ENCODE measurements at regions of chr17 and their contacts with region 1.

Region 1: GRCh38 chr17:77404812-77405581 is 264.2 kb downstream of the SEC14L1 start:
- DNase-seq: peak; percentile 96
- ATAC-seq: peak; percentile 84
- H3K4me3 Mint-ChIP-seq: peak overlapping the region; percentile 84
- H3K27ac Mint-ChIP-seq: peak overlapping the region; percentile 91
- H3K4me1 Mint-ChIP-seq: peaks cover 90% of the 10 kb centered on the region
- H3K27me3 Mint-ChIP-seq: no peaks in the 10 kb centered on the region

Region 2: DNA sequence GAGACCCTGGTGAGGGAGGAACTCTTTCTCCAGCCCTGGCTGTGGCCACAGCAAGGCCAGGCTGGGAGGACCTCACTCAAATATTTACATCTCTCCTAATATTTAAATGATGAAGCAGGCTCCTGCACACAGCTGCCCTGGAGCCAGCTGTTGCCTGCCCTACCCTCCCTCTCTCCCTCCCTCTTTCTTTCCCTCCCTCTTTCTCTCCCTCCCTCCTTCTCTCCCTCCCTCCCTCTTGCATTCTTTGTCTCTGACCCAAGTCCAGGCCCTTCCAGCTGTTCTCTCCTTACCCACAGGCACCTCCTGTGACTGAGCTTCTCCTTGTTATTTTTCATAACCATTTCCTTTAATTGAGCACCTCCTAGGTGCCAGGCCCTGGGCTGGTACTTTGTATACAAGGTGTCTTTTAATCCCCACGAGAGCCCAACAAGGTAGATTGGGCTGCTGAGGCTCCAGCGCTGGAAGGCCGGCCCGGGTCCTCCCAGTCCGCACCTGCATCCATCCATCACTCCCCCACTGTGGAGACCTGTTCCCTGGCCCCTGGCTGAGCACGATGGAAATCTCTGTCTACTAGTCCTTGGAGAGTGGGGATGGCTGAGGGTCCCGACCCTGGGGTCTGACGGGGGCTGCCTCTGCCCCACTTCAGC is 21.9 kb before region 1 on chr17:
- CTCF ChIA-PET with region 1: interaction called, 53 read pairs
- DNase-seq: no peak
- ATAC-seq: no peak
- H3K4me3 Mint-ChIP-seq: no peak overlapping the region
- H3K27ac Mint-ChIP-seq: peak overlapping the region; percentile 72
- H3K4me1 Mint-ChIP-seq: peaks cover 80% of the 10 kb centered on the region
- H3K27me3 Mint-ChIP-seq: no peaks in the 10 kb centered on the region

Region 3: GRCh38 chr17:77420804-77421629 is 16.0 kb after region 1 on chr17:
- CTCF ChIA-PET with region 1: interaction called, 33 read pairs
- DNase-seq: no peak
- ATAC-seq: peak; percentile 43
- H3K4me3 Mint-ChIP-seq: peak overlapping the region; percentile 42
- H3K27ac Mint-ChIP-seq: peak overlapping the region; percentile 68
- H3K4me1 Mint-ChIP-seq: peaks cover 47% of the 10 kb centered on the region
- H3K27me3 Mint-ChIP-seq: no peaks in the 10 kb centered on the region

Region 4: DNA sequence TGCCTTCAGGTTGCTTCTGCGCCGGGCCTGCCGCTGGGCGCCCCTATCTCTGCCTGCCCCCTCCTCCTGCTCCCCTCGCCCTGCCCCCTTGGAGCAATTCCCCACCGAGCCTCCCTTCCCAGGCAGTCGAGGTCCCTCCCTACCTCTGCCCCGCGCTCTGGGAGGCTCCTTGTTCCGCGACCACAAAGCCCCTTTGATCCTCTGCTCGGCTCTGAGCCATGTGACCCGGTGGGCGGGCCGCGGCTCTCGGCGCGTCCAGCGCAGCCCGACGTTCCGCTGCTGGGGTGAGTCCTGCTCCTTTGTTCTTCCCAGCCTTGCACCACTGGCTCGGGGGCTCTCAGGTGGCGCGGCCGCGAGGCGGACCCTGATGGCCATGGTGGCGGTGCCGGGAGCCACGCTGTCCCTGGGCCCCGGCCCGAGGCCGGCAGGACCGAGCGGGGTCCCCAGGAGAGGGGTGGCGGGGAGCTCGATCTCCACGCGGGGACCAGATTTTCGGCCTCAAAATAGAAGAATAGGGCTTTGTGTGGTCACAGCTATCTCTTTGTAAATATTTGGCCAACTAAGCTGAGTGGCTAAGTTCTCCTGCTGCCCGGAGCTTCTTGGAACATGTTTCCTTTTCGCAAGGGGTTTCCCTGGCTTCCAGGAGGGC is 46.4 kb after region 1 on chr17:
- CTCF ChIA-PET with region 1: interaction called, 27 read pairs
- DNase-seq: peak; percentile 76
- ATAC-seq: peak; percentile 54
- H3K4me3 Mint-ChIP-seq: peak overlapping the region; percentile 86
- H3K27ac Mint-ChIP-seq: peak overlapping the region; percentile 99
- H3K4me1 Mint-ChIP-seq: peaks cover 64% of the 10 kb centered on the region
- H3K27me3 Mint-ChIP-seq: no peaks in the 10 kb centered on the region

Region 5: GRCh38 chr17:77501101-77501566 is 96.1 kb after region 1 on chr17:
- CTCF ChIA-PET with region 1: interaction called, 46 read pairs
- DNase-seq: no peak
- ATAC-seq: no peak
- H3K4me3 Mint-ChIP-seq: no peak overlapping the region
- H3K27ac Mint-ChIP-seq: no peak overlapping the region
- H3K4me1 Mint-ChIP-seq: no peaks in the 10 kb centered on the region
- H3K27me3 Mint-ChIP-seq: no peaks in the 10 kb centered on the region

Region 6: GRCh38 chr17:77649717-77650211 is 244.8 kb after region 1 on chr17:
- CTCF ChIA-PET with region 1: no interaction called
- DNase-seq: peak; percentile 45
- ATAC-seq: no peak
- H3K4me3 Mint-ChIP-seq: no peak overlapping the region
- H3K27ac Mint-ChIP-seq: peak overlapping the region; percentile 5
- H3K4me1 Mint-ChIP-seq: peaks cover 29% of the 10 kb centered on the region
- H3K27me3 Mint-ChIP-seq: no peaks in the 10 kb centered on the region